ENCODE measurements at regions of chr12 and their contacts with region 1.

Region 1: DNA sequence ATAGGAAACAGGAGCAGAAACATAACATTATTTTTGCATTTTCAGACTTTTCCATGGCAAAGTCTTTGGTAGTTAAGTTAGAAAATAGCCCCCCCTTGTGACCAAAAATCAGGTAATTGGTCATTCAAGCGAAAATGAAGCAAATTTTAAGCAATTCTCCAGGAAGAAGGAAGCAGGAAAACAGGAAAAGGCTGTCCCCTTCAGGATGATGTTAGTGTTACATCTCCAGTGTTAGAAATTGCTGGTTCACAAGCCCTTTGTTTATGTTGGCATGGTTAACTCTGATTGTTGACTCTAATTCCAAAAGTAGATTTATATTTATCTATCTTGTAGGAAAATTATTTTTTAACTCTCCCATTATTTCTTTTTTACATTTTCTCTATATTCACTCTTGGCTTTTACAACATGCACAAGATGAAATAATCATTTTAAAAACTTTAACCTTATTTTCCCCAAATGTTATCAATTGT is 18.8 kb upstream of the GAS2L3 start:
- H3K4me3 ChIP-seq: no peak overlapping the region
- H3K27ac ChIP-seq: no peak overlapping the region
- H3K4me1 ChIP-seq: no peaks in the 10 kb centered on the region
- CTCF ChIP-seq: peak; percentile 88

Region 2: DNA sequence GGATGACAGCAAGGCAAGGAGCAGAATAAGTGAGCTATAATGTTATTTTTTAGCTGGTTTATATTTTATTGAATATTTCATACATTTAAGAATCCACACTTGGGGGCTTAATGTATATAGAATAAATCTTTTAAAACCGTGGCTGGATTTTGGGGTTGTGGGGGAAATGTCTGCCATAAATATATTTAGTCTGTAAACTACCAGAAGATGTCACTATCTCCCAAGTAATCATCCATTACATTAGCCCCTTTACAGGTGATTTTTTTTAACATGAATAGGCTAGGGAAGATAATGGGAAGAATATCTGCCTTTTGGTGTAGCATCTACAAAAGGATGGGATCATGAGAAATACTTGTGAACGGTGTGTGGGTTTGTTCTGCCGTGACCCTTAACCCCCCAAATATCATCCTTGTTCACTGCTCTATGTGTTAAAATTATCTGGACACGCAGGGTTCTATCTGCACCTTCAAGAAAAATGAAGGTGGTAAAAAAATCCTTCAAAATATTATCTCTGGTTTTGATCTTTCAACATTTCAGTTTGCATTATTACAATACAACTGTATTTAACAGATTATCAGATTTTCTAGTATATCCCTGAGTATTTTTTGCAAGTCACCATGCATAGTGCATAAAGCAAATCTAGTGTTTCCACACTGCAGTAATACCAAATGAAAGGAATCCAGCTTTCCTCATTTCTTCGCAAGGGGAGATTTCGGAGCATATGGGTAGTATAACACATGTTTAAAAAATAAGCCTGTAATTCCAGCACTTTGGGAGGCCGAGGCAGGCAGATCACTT is 205.8 kb before region 1 on chr12:
- CTCF ChIA-PET with region 1: interaction called, 55 read pairs
- POLR2A ChIA-PET with region 1: no interaction called
- H3K4me3 ChIP-seq: no peak overlapping the region
- H3K27ac ChIP-seq: no peak overlapping the region
- H3K4me1 ChIP-seq: no peaks in the 10 kb centered on the region
- CTCF ChIP-seq: peak; percentile 24; the same call in 1 of the 2 replicates

Region 3: DNA sequence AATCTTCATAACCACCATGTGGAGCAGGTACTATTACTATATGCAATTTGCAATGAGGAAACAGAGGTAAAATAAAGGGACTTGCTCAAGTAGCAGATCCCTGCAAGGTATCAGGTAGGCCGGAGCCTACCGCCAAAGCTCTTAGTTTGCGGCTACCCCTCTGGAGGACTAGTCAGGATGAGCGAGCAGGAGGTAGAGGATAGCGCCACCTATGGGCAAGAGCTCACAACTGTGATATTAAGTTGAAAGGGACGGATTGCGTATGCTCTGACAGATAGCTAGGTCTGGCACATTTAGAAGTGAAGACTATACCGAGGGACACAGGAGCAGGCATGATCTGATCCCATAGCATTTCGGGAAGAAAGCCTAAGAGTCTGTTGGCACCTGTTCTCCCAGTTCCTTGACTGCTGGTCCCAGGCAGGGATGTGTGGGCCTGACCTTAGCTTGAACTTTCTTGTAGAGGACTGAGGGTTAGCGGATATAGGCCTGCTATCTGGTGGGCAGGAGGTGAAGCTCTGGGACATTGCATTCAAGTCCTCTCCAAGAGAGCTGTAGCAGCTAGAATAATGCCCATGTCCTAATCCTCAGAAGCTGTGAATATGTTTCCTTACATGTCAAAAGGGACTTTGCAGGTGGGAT is 149.8 kb before region 1 on chr12:
- CTCF ChIA-PET with region 1: interaction called, 17 read pairs
- POLR2A ChIA-PET with region 1: no interaction called
- H3K4me3 ChIP-seq: no peak overlapping the region
- H3K27ac ChIP-seq: no peak overlapping the region
- H3K4me1 ChIP-seq: no peaks in the 10 kb centered on the region
- CTCF ChIP-seq: no peak

Region 4: DNA sequence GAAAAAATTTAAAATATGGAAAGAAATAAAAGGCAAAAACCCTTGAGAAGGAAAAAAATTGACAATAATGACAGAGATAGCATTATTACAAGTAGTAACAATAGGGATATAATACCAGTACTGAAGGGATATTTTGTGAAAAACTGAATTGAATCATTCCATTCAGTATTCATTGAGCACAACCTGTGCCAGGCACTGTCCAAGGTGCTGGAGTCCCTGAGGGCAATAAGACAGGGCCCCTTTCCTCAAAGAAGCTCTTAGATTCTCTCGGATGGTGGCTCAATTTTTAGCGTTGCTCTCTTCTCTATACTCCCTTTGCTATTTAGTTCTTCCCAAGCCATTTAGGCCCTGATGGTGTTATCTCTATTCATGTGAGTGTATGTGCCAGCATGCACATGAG is 15.4 kb before region 1 on chr12:
- CTCF ChIA-PET with region 1: interaction called, 32 read pairs
- POLR2A ChIA-PET with region 1: no interaction called
- H3K4me3 ChIP-seq: no peak overlapping the region
- H3K27ac ChIP-seq: no peak overlapping the region
- H3K4me1 ChIP-seq: no peaks in the 10 kb centered on the region
- CTCF ChIP-seq: no peak

Region 5: GRCh38 chr12:100566887-100567637 is 12.4 kb after region 1 on chr12:
- CTCF ChIA-PET with region 1: interaction called, 18 read pairs
- POLR2A ChIA-PET with region 1: no interaction called
- H3K4me3 ChIP-seq: no peak overlapping the region
- H3K27ac ChIP-seq: no peak overlapping the region
- H3K4me1 ChIP-seq: no peaks in the 10 kb centered on the region
- CTCF ChIP-seq: no peak

Region 6: GRCh38 chr12:100573292-100574186 is 18.9 kb after region 1 on chr12 and contains the start of gene GAS2L3:
- CTCF ChIA-PET with region 1: interaction called, 13 read pairs
- POLR2A ChIA-PET with region 1: interaction called, 3 read pairs
- H3K4me3 ChIP-seq: peak within 1 kb of the TSS; percentile 89
- H3K27ac ChIP-seq: peak within 1 kb of the TSS; percentile 46; the same call in 1 of the 2 replicates
- H3K4me1 ChIP-seq: peaks cover 15% of the 10 kb centered on the region; the same call in 1 of the 2 replicates
- CTCF ChIP-seq: no peak

Region 7: GRCh38 chr12:100608776-100609175 is 54.1 kb after region 1 on chr12:
- CTCF ChIA-PET with region 1: no interaction called
- POLR2A ChIA-PET with region 1: no interaction called
- H3K4me3 ChIP-seq: no peak overlapping the region
- H3K27ac ChIP-seq: no peak overlapping the region
- H3K4me1 ChIP-seq: no peaks in the 10 kb centered on the region
- CTCF ChIP-seq: no peak

Region 8: DNA sequence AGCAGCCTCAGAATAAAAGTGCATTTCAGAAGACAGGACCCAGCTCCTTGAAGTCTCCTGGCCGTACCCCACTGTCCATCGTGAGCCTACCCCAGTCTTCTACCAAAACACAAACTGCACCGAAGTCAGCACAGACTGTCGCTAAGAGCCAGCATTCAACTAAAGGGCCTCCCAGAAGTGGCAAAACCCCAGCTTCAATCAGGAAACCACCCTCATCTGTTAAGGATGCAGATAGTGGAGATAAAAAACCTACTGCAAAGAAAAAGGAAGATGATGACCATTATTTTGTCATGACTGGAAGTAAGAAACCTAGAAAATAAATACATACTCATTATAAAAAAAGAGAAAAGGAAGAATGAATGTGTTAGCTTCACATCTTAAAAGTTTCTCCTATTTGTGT is 69.9 kb after region 1 on chr12:
- CTCF ChIA-PET with region 1: no interaction called
- POLR2A ChIA-PET with region 1: no interaction called
- H3K4me3 ChIP-seq: no peak overlapping the region
- H3K27ac ChIP-seq: no peak overlapping the region
- H3K4me1 ChIP-seq: no peaks in the 10 kb centered on the region
- CTCF ChIP-seq: no peak

Region 9: GRCh38 chr12:100672075-100672592 is 117.5 kb after region 1 on chr12:
- CTCF ChIA-PET with region 1: interaction called, 13 read pairs
- POLR2A ChIA-PET with region 1: no interaction called
- H3K4me3 ChIP-seq: no peak overlapping the region
- H3K27ac ChIP-seq: no peak overlapping the region
- H3K4me1 ChIP-seq: no peaks in the 10 kb centered on the region
- CTCF ChIP-seq: no peak; the same call in 1 of the 2 replicates

Region 10: DNA sequence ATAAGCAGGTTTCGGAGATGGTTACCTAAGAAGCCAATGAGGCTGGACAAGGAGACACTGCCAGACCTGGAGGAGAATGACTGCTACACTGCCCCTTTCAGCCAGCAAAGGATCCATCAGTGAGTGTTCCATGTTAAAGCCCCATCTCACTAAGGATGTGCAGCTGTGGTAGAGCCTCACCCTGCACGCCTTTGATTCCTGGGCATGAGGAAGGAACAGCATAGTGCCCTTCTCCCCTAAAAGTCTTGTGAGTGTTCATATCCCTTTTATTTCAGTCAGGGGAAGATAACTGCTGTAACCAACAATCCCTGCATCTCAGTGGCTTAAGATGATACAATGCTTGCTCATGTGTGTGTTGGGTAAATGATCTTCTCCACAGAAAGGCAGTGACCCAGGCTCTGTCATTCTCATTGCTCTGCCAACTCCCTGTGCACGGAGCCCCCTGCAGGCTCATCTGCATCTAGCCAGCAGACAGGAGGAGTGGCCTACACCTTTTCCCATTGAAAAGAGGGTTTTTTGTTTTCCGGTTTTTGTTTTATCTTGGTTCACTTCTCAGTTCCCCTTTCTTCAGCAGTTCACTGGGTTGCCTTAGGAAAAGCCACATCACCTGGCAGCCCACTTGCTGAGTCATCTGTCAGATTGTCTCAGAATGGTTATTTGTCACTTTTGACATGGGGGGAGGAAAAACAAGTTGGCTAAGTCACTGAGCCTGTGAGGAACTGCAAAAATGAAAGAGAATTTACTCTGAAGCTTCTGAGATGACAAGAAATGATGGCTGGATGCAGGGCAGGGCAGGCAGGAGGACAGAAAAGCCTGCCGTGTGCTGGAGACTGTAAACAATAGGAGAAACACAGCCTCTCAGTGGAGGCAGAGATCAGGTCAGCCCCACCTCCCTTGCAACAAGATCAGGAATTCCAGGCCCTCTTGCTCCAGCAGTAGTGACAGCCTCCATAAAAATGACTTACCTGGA is 433.2 kb after region 1 on chr12:
- CTCF ChIA-PET with region 1: no interaction called
- POLR2A ChIA-PET with region 1: no interaction called
- H3K4me3 ChIP-seq: no peak overlapping the region
- H3K27ac ChIP-seq: no peak overlapping the region
- H3K4me1 ChIP-seq: no peaks in the 10 kb centered on the region
- CTCF ChIP-seq: no peak

Region 11: GRCh38 chr12:101891462-101892273 is 1337.0 kb after region 1 on chr12:
- CTCF ChIA-PET with region 1: no interaction called
- POLR2A ChIA-PET with region 1: no interaction called
- H3K4me3 ChIP-seq: no peak overlapping the region
- H3K27ac ChIP-seq: peak overlapping the region; percentile 17; the same call in 1 of the 2 replicates
- H3K4me1 ChIP-seq: peaks cover 10% of the 10 kb centered on the region
- CTCF ChIP-seq: no peak

Measured in HEK293 (cell line).